Calu3 (cell line): ENCODE measurements at regions of chr10 and their contacts with region 1.

Region 1: GRCh38 chr10:13219685-13220670 is 14.2 kb downstream of the UCMA start:
- DNase-seq: peak; percentile 63
- H3K4me3 Mint-ChIP-seq: no peak overlapping the region
- H3K27ac Mint-ChIP-seq: no peak overlapping the region
- H3K4me1 Mint-ChIP-seq: no peaks in the 10 kb centered on the region
- H3K27me3 Mint-ChIP-seq: no peaks in the 10 kb centered on the region
- CTCF ChIP-seq: peak; percentile 42

Region 2: DNA sequence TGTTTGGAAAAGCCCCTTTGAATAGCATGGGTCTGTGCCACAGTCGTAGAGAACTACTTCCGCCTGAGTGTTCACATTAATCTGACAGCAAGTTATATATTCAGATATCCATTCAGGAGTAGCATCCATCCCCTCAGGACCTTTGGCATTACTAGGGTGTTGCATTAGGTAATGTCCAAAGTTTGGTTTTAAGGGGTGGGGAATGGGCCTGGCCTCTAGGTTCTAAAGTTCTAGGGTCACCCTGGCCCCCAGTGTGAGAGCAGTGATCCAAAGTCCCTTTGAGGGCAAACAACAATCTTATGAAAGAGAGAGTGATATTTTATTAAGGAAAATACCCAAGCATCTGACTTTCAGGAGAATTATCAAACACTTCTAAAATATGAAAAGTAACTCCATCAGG is 46.4 kb before region 1 on chr10:
- CTCF ChIA-PET with region 1: no interaction called
- intact Hi-C with region 1: no loop called
- DNase-seq: no peak
- H3K4me3 Mint-ChIP-seq: no peak overlapping the region
- H3K27ac Mint-ChIP-seq: no peak overlapping the region
- H3K4me1 Mint-ChIP-seq: no peaks in the 10 kb centered on the region
- H3K27me3 Mint-ChIP-seq: no peaks in the 10 kb centered on the region
- CTCF ChIP-seq: no peak

Region 3: GRCh38 chr10:13299437-13300287 is 79.7 kb after region 1 on chr10 and contains the start of gene PHYH:
- CTCF ChIA-PET with region 1: interaction called, 6 read pairs
- intact Hi-C with region 1: loop called (anchors 5 kb)
- DNase-seq: peak; percentile 88
- H3K4me3 Mint-ChIP-seq: peak within 1 kb of the TSS; percentile 70
- H3K27ac Mint-ChIP-seq: peak within 1 kb of the TSS; percentile 77
- H3K4me1 Mint-ChIP-seq: peaks cover 16% of the 10 kb centered on the region
- H3K27me3 Mint-ChIP-seq: no peaks in the 10 kb centered on the region
- CTCF ChIP-seq: no peak
- total RNA-seq, gene PHYH: 26.7 and 30.4 TPM in 2 replicates